Tibial artery (tissue), 4 donors: ENCODE measurements at regions of chr16 and their contacts with region 1.

Region 1: DNA sequence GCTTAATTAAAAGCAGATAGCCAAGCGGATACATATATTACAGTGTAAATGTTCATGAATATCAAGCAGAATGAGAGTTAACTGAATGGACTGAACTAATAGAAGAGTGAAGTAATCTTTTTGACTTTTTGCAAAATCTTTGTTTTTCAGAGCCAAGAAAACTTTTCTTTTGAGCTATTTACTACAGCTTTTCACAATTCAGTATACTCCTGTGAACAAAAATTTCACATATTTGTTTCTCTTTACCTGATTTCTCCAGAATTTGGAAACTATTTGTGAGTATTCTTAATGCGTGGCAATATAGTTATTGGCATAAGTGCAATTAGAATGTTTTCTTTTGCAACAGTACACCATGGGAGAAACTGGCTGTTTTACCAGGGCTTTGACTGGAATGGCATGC is 9.1 kb upstream of the DUXB start:
- DNase-seq: no peak
- H3K4me3 ChIP-seq: no peak overlapping the region
- H3K27ac ChIP-seq: no peak overlapping the region
- H3K4me1 ChIP-seq: no peaks in the 10 kb centered on the region
- H3K27me3 ChIP-seq: no peaks in the 10 kb centered on the region
- CTCF ChIP-seq: no peak

Region 2: DNA sequence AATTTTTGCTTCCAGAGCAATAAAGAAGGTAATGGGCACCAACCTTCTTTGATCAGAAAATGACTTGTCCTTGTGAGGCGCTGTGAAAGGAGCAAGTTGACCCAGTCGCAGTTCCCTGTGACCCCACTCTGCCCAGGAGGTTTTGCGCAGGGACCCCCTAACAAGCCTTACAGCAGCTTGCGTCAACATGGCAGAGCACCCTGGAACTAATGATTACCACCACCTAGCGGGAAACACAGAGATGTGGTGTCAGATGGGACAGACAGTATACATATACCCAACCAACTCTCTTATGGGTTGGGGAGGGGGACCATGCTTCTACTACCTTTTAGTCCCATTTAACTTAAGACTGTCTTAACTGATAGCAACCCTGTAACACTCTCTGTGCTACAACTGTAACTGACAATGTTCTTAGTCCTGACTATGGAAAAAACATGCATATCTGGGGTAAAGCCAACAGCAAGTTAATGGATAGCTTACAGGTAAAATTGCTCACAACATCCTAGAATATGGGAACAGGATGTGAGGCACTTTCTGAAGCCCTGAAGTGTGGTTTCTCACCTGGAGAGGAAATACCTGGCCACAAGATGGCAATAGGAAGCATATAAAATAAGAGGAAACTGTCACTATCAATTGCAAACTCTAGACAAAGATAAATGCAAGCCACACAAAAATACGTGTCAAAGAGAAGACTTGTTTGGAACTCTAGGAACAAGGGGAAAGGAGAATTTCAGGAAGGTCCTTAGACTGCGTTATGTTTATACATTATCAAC is 65.9 kb before region 1 on chr16:
- intact Hi-C with region 1: no loop called
- DNase-seq: no peak
- H3K4me3 ChIP-seq: no peak overlapping the region
- H3K27ac ChIP-seq: no peak overlapping the region
- H3K4me1 ChIP-seq: peaks cover 0 to 31% (median 16%) of the 10 kb centered on the region in 4 donors
- H3K27me3 ChIP-seq: no peaks in the 10 kb centered on the region
- CTCF ChIP-seq: no peak

Region 3: DNA sequence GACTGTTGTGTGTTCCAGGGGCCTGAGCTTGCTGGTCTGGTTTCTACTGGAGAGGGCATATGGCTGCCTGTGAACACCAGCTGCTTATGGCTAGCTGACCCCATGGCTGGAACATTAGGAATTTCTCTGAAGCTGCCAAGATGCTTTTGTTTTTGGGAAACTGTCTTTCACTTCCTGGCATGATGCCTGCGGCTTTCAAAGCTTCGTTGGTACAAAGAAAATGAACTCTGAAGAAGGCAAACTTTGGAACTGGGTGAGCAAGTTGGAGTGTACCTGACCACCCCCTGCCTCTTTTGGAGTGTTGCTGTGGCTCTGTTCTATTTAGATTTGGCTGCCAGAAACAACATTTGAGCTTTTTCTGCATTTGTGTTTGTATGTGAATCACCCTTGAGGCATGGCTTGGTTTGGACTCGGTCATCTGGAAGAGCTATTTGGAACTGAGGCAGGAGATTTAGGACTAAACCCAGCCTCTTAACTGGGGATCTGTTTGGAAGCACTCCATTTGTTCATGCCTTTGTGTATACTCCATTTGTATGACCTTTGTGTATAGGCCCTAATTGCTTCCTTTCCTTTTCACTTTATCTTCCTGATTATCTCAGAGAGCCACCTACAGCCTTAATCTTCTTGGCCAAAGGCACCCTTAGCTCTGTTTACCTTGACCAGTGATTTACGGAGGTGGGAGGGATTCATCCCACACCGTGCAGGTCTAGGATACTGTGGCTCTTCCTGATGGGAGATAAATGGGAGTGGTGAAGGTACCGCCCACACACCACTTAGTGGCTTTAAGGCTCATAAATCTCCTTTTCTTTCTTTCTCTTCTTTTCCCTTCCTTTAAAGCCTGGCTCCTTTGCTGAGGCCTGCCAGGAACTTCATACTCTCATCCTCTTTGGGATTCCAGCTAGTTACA is 23.2 kb after region 1 on chr16:
- intact Hi-C with region 1: loop called (anchors 2 kb)
- DNase-seq: peak in 1 of 2 donors; percentile 69
- H3K4me3 ChIP-seq: no peak overlapping the region
- H3K27ac ChIP-seq: peak overlapping the region; percentile 43 to 66
- H3K4me1 ChIP-seq: peaks cover 0 to 24% (median 14%) of the 10 kb centered on the region in 4 donors
- H3K27me3 ChIP-seq: no peaks in the 10 kb centered on the region
- CTCF ChIP-seq: no peak

Region 4: DNA sequence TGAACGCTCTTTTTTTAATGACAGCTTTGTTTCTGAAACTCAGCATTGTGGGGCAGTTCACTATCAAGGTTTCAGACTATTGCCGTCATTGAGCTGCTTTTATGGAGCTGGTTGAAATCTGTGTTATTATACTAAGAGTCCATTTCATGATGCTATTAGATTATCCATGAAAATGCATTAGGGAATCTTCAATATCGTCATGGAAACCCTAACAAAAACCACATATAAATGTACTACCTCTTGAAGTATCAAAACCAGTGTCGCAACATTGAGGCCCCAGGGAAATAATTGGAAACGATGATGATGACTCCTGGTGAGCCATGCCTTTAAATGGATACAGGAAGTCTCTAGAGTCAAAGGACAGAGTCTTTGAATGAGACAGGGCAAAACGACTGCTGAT is 247.5 kb after region 1 on chr16:
- intact Hi-C with region 1: no loop called
- DNase-seq: no peak
- H3K4me3 ChIP-seq: no peak overlapping the region
- H3K27ac ChIP-seq: no peak overlapping the region
- H3K4me1 ChIP-seq: no peaks in the 10 kb centered on the region
- H3K27me3 ChIP-seq: no peaks in the 10 kb centered on the region
- CTCF ChIP-seq: no peak